MCF 10A (cell line): ENCODE measurements at regions of chr6 and their contacts with region 1.

Region 1: DNA sequence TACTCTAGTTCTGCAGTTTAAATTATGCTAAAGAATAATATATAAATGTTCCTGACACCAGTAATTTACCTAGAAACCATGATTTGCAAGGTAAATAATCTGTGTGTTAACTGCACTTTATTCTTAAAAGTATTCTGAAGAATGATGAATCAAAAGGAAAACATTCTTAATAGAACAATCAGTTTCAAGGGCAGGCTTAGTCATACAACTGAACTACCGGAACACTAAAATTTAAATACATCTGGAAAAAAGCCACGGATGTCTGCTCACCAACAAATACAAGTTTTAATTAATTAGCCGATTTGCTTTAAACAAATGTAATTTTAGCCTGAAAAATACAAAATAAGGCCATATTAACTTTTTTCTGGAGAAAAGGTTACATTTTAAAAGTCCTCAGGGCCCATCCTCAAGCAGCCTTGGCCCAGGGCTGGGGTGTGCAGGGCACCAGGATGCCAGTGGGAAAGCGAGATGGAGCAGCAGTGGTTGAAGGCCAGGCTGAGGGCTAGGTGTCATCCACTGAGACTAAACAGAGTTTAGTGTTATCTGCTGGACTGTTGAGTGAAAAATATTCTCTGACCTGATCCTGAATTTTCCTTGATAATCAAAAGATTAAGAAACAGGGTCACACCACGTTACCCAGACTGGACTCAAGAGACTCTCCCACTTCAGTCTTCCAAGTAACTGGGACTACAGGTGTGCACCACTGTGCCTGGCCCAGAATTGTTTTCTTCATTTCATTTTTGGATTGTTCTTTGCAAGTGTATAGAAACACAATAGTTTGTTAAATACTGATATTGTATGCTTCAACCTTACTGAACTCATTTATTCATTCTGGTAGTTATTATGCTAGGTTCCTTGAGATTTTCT is 88.2 kb upstream of the DST start:
- DNase-seq: peak; percentile 60
- H3K4me3 Mint-ChIP-seq: no peak overlapping the region
- H3K27ac Mint-ChIP-seq: peak overlapping the region; percentile 92
- H3K4me1 Mint-ChIP-seq: peaks cover 70% of the 10 kb centered on the region
- H3K27me3 Mint-ChIP-seq: no peaks in the 10 kb centered on the region
- CTCF ChIP-seq: no peak

Region 2: DNA sequence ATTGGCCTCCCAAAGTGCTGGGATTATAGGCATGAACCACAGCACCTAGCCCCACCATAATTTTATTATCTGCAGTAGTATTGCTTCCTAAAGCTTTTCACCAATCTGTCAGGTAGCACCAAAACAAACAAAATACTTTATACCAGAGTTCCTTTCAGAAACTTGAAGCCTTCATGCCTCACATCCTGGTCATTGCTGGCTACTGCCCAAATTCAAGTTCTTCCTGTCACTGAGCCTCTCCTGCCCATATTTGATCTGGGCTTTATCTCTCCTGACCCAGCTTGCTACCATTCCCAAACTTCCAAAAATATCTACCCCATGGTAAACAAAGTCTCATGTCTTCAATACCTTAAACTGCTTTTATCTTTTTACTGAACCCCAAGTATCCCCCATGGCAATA is 53.3 kb before region 1 on chr6:
- CTCF ChIA-PET with region 1: no interaction called
- POLR2A ChIA-PET with region 1: no interaction called
- intact Hi-C with region 1: no loop called
- DNase-seq: no peak
- H3K4me3 Mint-ChIP-seq: no peak overlapping the region
- H3K27ac Mint-ChIP-seq: no peak overlapping the region
- H3K4me1 Mint-ChIP-seq: no peaks in the 10 kb centered on the region
- H3K27me3 Mint-ChIP-seq: no peaks in the 10 kb centered on the region
- CTCF ChIP-seq: no peak

Region 3: DNA sequence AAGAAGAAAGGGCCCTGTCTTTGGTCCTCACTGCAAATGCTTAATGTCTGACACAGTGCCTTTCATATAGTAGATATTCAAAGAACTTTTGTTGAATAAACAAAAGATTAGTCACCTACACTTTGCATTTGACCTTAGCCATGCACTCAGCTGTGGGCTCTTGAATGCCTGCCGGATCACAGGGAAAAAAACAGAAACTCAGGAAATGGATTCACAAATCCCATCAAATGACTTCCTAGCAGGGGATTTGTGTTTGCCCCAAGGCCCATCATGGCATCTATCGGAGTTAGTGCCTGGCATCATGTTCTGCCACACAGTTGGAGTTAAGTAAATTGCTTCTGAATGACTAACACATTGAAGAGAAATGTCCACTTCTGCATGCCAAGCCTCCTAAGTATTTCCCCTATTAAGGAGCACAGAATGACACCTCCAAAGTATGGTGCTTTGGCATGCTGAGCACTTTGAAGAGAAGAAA is 15.9 kb before region 1 on chr6:
- CTCF ChIA-PET with region 1: interaction called, 17 read pairs
- POLR2A ChIA-PET with region 1: interaction called, 133 read pairs
- intact Hi-C with region 1: loop called (anchors 2 kb)
- DNase-seq: peak; percentile 91
- H3K4me3 Mint-ChIP-seq: peak overlapping the region; percentile 2
- H3K27ac Mint-ChIP-seq: peak overlapping the region; percentile 59
- H3K4me1 Mint-ChIP-seq: peaks cover 33% of the 10 kb centered on the region
- H3K27me3 Mint-ChIP-seq: no peaks in the 10 kb centered on the region
- CTCF ChIP-seq: no peak

Region 4: DNA sequence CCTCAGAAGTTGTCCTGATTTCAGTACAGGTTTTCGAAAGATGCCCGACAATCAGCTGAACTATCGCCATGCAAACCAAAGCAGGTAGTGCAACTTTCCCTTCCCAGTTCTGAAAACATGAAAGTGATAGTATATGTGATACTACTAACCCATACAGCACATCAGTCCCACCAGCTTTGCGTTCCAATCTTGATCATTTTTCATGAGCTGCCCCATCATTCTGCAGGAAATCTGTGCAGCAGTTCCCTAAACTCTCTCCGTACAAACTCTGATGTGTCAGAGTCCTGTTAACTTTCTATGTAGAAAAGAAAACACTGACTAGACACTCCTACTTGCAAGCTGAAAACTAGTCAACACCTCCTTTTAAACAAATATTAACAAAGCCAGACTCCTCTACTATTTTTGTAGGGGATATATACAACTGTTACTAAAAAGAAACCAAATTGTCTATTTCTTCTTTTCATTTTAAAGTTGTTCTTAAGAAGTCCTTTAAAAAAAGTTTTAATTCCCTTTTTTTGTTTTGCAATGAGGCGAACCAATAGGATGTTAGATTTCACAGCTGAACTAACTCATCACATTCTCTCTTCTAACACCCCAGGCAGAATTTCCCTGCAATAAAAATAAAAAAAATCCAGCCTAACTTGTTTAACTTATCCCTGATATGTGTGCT is 11.4 kb after region 1 on chr6:
- CTCF ChIA-PET with region 1: interaction called, 5 read pairs
- POLR2A ChIA-PET with region 1: interaction called, 110 read pairs
- intact Hi-C with region 1: no loop called
- DNase-seq: no peak
- H3K4me3 Mint-ChIP-seq: peak overlapping the region; percentile 83
- H3K27ac Mint-ChIP-seq: peak overlapping the region; percentile 94
- H3K4me1 Mint-ChIP-seq: peaks cover 59% of the 10 kb centered on the region
- H3K27me3 Mint-ChIP-seq: no peaks in the 10 kb centered on the region
- CTCF ChIP-seq: no peak

Region 5: GRCh38 chr6:56749632-56750151 is 18.8 kb after region 1 on chr6:
- CTCF ChIA-PET with region 1: interaction called, 5 read pairs
- POLR2A ChIA-PET with region 1: interaction called, 110 read pairs
- intact Hi-C with region 1: no loop called
- DNase-seq: peak; percentile 88
- H3K4me3 Mint-ChIP-seq: peak overlapping the region; percentile 65
- H3K27ac Mint-ChIP-seq: peak overlapping the region; percentile 91
- H3K4me1 Mint-ChIP-seq: peaks cover 51% of the 10 kb centered on the region
- H3K27me3 Mint-ChIP-seq: no peaks in the 10 kb centered on the region
- CTCF ChIP-seq: no peak

Region 6: DNA sequence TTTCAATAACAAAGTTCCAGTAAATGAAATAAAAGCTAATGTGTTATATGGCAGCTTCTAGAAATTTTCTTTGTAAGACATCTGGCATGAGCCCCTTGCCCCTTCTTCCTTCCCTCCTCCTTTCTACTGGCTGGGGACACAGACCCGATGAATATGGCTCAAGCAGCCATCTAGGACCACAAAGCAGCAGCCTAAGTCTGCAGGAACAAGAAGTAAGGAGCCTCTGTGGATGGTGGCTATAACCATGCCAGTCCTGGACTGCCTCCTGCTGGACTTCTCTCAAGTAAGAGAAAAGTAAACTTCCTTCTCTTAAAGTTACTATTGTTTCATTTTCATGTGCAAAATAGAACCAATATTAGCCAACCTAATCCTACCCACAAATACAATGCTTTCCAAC is 26.7 kb after region 1 on chr6:
- CTCF ChIA-PET with region 1: interaction called, 19 read pairs
- POLR2A ChIA-PET with region 1: interaction called, 24 read pairs
- intact Hi-C with region 1: no loop called
- DNase-seq: peak; percentile 69
- H3K4me3 Mint-ChIP-seq: no peak overlapping the region
- H3K27ac Mint-ChIP-seq: no peak overlapping the region
- H3K4me1 Mint-ChIP-seq: peaks cover 21% of the 10 kb centered on the region
- H3K27me3 Mint-ChIP-seq: no peaks in the 10 kb centered on the region
- CTCF ChIP-seq: peak; percentile 66